ENCODE measurements at regions of chr19 and their contacts with region 1.

Region 1: GRCh38 chr19:3108775-3109174 is 14.6 kb downstream of the GNA11 start:
- DNase-seq: peak; percentile 77
- CTCF ChIP-seq: peak; percentile 87

Region 2: GRCh38 chr19:2962045-2962561 is 146.7 kb before region 1 on chr19:
- CTCF ChIA-PET with region 1: interaction called, 41 read pairs
- POLR2A ChIA-PET with region 1: no interaction called
- DNase-seq: peak; percentile 72
- CTCF ChIP-seq: peak; percentile 60

Region 3: GRCh38 chr19:3075895-3076431 is 32.8 kb before region 1 on chr19:
- CTCF ChIA-PET with region 1: interaction called, 30 read pairs
- POLR2A ChIA-PET with region 1: no interaction called
- DNase-seq: peak; percentile 86
- CTCF ChIP-seq: peak; percentile 96

Region 4: DNA sequence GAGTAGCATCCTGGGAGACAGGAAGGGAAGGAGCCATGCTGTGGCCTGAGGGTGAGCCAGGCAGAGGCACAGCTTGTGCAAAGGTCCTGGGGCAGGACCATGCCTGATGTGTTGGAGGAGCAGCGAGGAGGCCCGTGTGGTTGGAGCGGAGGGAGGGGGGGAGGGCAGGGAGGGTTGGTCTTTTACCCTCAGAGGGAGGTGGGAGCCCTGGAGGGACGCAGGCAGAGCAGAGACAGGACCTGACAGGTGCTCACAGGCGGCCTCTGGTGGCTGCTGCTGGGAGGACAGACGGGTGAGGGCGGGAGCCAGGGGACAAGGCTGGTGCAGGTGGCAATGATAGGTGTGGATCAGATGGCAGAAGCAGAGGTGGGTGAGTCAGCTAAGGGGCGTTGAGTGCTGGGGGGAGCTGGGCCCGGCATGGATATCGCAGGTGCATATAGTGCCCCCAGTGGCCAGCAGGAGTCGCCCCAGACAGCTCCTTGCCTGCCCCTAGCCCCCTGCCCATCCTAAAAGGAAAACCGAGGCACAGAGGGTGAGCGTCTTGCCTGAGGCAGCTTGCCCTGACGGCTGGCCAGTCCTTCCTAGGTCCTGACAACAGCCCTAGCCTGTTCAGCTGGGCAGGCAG is 17.2 kb after region 1 on chr19:
- CTCF ChIA-PET with region 1: interaction called, 78 read pairs
- POLR2A ChIA-PET with region 1: no interaction called
- DNase-seq: peak; percentile 80
- CTCF ChIP-seq: peak; percentile 70

Region 5: GRCh38 chr19:3146677-3147100 is 37.9 kb after region 1 on chr19:
- CTCF ChIA-PET with region 1: interaction called, 11 read pairs
- POLR2A ChIA-PET with region 1: no interaction called
- DNase-seq: no peak
- CTCF ChIP-seq: peak; percentile 83

Region 6: DNA sequence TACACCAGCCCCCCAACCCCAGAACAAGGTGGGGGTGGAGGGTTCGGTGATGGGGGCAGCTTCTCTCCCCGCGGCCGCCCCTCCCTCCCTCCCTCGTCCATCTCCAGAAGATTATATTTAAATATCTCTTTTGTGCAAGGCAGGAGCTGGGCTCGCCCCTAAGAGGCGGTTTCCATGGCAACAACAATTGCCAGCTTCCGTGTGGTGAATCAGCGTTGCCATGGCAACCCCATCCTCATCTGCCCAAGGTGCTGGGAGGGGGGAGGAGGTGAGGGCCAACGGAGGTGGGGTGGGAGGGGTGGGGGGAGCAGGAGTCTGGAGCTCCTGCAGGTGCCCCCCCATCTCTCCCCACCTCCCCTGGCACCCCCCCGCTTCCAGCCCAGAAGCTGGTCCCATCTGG is 162.1 kb after region 1 on chr19:
- CTCF ChIA-PET with region 1: no interaction called
- POLR2A ChIA-PET with region 1: no interaction called
- DNase-seq: no peak
- CTCF ChIP-seq: no peak